Activated CD4-positive, alpha-beta memory T cell treated with anti-CD3 and anti-CD28 coated beads for 36 hours (primary cell): ENCODE measurements at regions of chr2 and their contacts with region 1.

Region 1: DNA sequence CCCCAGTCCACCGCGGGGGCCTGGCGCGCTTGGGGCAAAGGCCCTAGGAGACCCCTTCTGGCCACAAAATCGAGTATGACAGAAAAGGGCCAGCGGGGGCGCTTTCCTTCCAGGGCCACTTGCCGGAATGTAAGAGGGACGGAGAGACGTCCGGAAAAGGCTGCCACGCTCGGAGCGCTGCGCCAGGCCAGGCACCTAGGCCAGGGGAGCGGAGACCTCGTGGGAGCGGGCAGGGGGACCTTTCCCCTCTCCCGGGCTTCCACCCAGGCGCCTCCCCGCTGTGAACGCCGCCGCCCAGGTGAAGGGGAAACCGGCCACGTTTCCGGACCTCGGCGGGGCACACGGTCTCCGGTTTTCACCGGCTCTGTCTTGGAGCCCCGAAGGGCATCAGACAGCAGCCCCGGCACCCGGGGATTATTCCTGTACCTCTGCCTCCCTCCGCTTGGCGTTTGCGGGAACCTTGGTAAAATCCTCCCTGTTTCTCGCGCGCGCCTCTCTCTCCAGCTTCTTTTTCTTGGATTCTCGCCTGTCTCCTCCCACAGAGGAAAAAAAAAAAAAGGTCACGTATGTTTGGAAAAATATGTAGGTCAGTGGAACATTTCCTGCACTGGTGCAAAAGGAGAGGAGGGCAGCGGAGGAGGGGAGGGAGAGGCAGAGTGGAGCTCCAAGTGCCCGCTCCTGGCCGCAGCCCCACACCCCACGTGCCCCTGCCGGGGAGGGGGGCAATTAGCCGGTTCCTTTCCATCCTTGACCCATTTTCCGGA is 1.2 kb upstream of the NPAS2 start:
- DNase-seq: peak; percentile 21
- H3K4me3 Mint-ChIP-seq: peak overlapping the region; percentile 61
- H3K27ac Mint-ChIP-seq: no peak overlapping the region
- H3K4me1 Mint-ChIP-seq: peaks cover 13% of the 10 kb centered on the region
- H3K27me3 Mint-ChIP-seq: peaks cover 38% of the 10 kb centered on the region

Region 2: GRCh38 chr2:100580367-100581276 is 238.2 kb before region 1 on chr2:
- CTCF ChIA-PET with region 1: no interaction called
- POLR2A ChIA-PET with region 1: no interaction called
- intact Hi-C with region 1: loop called (anchors 10 kb)
- DNase-seq: peak; percentile 64
- H3K4me3 Mint-ChIP-seq: peak overlapping the region; percentile 71
- H3K27ac Mint-ChIP-seq: peak overlapping the region; percentile 96
- H3K4me1 Mint-ChIP-seq: peaks cover 38% of the 10 kb centered on the region
- H3K27me3 Mint-ChIP-seq: no peaks in the 10 kb centered on the region

Region 3: DNA sequence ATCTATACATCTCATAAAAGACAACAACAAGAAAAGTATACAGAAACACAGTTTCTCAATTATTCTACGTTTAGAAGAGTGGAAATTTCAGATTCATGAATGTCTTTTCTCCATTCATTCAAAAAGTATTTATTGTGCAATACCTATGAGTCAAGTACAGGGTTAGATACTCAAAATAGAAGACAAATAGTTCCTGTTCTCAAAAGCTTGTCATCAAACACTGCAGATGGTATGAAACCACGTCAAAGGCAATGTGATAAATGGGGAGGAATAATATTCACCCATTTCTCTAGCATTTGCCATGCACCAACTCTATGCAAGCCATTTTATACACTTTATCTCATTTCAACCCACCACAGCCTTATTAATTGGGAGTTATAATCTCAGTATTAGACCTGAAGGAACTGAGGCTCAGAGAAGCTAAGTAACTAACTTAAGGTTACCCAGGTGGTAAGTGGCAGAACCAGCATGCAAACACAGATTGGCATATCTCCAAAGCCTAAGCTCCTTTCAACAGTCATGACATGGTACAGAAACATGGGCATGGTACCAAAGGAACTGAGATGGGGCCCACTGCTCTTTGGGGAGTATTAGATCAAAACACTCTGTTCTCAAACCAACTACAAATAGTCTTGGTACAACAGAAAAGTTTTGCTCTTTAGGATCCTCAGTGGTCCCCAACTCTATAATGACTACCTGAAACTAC is 66.0 kb before region 1 on chr2:
- CTCF ChIA-PET with region 1: no interaction called
- POLR2A ChIA-PET with region 1: interaction called, 5 read pairs
- intact Hi-C with region 1: loop called (anchors 10 kb)
- DNase-seq: no peak
- H3K4me3 Mint-ChIP-seq: no peak overlapping the region
- H3K27ac Mint-ChIP-seq: no peak overlapping the region
- H3K4me1 Mint-ChIP-seq: peaks cover 9% of the 10 kb centered on the region
- H3K27me3 Mint-ChIP-seq: peaks cover 7% of the 10 kb centered on the region

Region 4: GRCh38 chr2:100882645-100883613 is 64.1 kb after region 1 on chr2:
- CTCF ChIA-PET with region 1: no interaction called
- POLR2A ChIA-PET with region 1: no interaction called
- intact Hi-C with region 1: no loop called
- DNase-seq: peak; percentile 57
- H3K4me3 Mint-ChIP-seq: no peak overlapping the region
- H3K27ac Mint-ChIP-seq: no peak overlapping the region
- H3K4me1 Mint-ChIP-seq: peaks cover 2% of the 10 kb centered on the region
- H3K27me3 Mint-ChIP-seq: no peaks in the 10 kb centered on the region